ENCODE measurements at regions of chr3 and their contacts with region 1.

Region 1: GRCh38 chr3:36923523-36923943 is 21.3 kb downstream of the TRANK1 start:
- DNase-seq: no peak
- ATAC-seq: no peak
- H3K4me3 Mint-ChIP-seq: no peak overlapping the region
- H3K27ac Mint-ChIP-seq: no peak overlapping the region
- H3K4me1 Mint-ChIP-seq: peaks cover 5% of the 10 kb centered on the region
- H3K27me3 Mint-ChIP-seq: no peaks in the 10 kb centered on the region

Region 2: GRCh38 chr3:36707623-36708409 is 215.7 kb before region 1 on chr3:
- CTCF ChIA-PET with region 1: no interaction called
- DNase-seq: no peak
- ATAC-seq: no peak
- H3K4me3 Mint-ChIP-seq: no peak overlapping the region
- H3K27ac Mint-ChIP-seq: no peak overlapping the region
- H3K4me1 Mint-ChIP-seq: peaks cover 2% of the 10 kb centered on the region
- H3K27me3 Mint-ChIP-seq: no peaks in the 10 kb centered on the region

Region 3: DNA sequence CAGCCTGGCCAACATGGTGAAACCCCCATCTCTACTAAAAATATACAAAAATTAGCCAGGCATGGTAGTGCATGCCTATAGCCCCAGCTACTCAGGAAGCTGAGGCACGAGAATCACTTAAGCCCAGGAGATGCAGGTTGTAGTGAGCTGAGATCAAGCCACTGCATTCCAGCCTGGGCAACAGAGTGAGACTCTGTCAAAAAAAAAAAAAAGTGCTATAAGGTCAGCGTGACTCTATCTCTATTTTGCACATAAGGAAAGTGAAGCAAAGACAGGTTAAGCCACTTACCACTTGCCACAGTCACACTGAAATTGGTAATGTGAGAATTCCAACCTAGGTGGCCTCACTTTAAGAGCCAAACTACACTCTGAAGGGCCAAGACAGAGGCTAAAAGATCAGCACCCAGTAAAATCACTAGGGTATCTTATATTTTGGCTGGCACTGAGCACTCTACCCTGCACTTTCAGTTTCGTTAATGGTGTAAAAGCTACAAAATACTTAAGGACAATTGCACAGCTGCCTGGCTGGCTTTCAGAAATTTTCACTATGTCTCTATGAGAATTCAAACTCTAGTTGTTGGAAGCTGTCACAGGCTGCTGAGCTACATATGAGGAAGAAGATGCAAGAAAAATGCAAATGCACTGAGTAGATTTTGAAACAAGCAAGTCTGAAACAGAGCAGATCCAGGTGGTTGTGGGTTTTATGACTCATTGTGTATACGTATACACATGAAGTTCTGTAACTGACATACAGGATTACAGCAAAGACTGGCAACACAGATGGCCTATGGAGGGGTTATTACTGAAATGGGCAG is 11.3 kb before region 1 on chr3:
- CTCF ChIA-PET with region 1: interaction called, 10 read pairs
- DNase-seq: peak; percentile 67
- ATAC-seq: peak; percentile 88
- H3K4me3 Mint-ChIP-seq: peak overlapping the region; percentile 74
- H3K27ac Mint-ChIP-seq: peak overlapping the region; percentile 95
- H3K4me1 Mint-ChIP-seq: peaks cover 42% of the 10 kb centered on the region
- H3K27me3 Mint-ChIP-seq: no peaks in the 10 kb centered on the region

Region 4: DNA sequence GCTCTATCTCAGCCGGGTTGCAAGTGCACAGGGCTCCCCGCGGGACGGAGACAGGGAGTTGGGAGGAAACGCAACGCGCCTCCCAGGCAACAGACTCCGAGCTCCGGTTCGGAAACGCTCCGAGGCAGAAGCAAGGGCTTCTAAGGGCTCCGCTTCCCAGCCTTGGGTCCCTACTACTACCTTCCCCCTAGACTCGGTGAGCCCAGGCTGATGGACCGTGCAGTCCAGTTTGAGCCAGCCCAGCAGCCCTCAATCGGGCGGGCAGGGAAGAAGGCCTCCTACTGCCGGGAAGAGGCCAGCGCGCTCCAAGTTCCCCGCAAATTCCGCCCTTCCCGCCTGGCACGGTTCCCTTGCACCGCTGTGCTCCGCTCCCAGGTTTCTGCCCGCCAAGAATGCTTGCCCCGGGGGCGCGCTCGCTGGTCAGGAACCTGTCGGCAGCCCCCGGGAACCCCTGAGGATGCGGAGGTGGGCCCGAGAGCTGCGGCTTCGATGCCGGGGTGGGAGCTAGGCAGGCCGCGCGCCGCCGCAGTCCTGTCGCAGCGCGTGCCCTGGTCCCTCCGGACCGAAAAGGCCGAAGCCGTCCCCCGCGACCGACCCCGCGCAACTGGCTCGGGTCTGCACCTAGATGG is 20.6 kb after region 1 on chr3:
- CTCF ChIA-PET with region 1: no interaction called
- DNase-seq: peak; percentile 44
- ATAC-seq: peak; percentile 50
- H3K4me3 Mint-ChIP-seq: peak overlapping the region; percentile 68
- H3K27ac Mint-ChIP-seq: no peak overlapping the region
- H3K4me1 Mint-ChIP-seq: peaks cover 13% of the 10 kb centered on the region
- H3K27me3 Mint-ChIP-seq: peaks cover 3% of the 10 kb centered on the region

Region 5: GRCh38 chr3:37210230-37210629 is 286.7 kb after region 1 on chr3:
- CTCF ChIA-PET with region 1: no interaction called
- DNase-seq: no peak
- ATAC-seq: no peak
- H3K4me3 Mint-ChIP-seq: no peak overlapping the region
- H3K27ac Mint-ChIP-seq: no peak overlapping the region
- H3K4me1 Mint-ChIP-seq: no peaks in the 10 kb centered on the region
- H3K27me3 Mint-ChIP-seq: peaks cover 2% of the 10 kb centered on the region